ENCODE measurements at regions of chr9 and their contacts with region 1.

Region 1: GRCh38 chr9:133485361-133486260 is 6.7 kb upstream of the SLC2A6 start:
- DNase-seq: no peak
- ATAC-seq: peak; percentile 76
- H3K4me3 ChIP-seq: no peak overlapping the region
- H3K27ac ChIP-seq: no peak overlapping the region
- H3K4me1 ChIP-seq: peaks cover 3% of the 10 kb centered on the region
- H3K27me3 ChIP-seq: no peaks in the 10 kb centered on the region; a peak in 3 of 4 replicates
- CTCF ChIP-seq: no peak
- EP300 ChIP-seq: no peak
- POLR2A ChIP-seq: no peak
- RAD21 ChIP-seq: no peak

Region 2: GRCh38 chr9:133335878-133336811 is 149.5 kb before region 1 on chr9 and contains the start of gene SURF6:
- CTCF ChIA-PET with region 1: interaction called, 11 read pairs
- POLR2A ChIA-PET with region 1: no interaction called
- RAD21 ChIA-PET with region 1: no interaction called
- SMC1A ChIA-PET with region 1: no interaction called
- in situ Hi-C with region 1: no loop called
- intact Hi-C with region 1: no loop called
- DNase-seq: peak; percentile 69
- ATAC-seq: peak; percentile 98
- H3K4me3 ChIP-seq: peak within 1 kb of the TSS; percentile 98
- H3K27ac ChIP-seq: peak within 1 kb of the TSS; percentile 82
- H3K4me1 ChIP-seq: peaks cover 9% of the 10 kb centered on the region
- H3K27me3 ChIP-seq: no peaks in the 10 kb centered on the region
- CTCF ChIP-seq: no peak
- EP300 ChIP-seq: no peak
- POLR2A ChIP-seq: peak; percentile 90
- RAD21 ChIP-seq: no peak
- polyA plus RNA-seq, gene SURF6: 2.2 to 3.0 TPM

Region 3: GRCh38 chr9:133406480-133407307 is 78.9 kb before region 1 on chr9:
- CTCF ChIA-PET with region 1: interaction called, 6 read pairs
- POLR2A ChIA-PET with region 1: no interaction called
- RAD21 ChIA-PET with region 1: no interaction called
- SMC1A ChIA-PET with region 1: no interaction called
- in situ Hi-C with region 1: loop called (anchors 5 kb)
- intact Hi-C with region 1: loop called (anchors 1 kb)
- DNase-seq: no peak
- ATAC-seq: peak; percentile 97
- H3K4me3 ChIP-seq: no peak overlapping the region
- H3K27ac ChIP-seq: no peak overlapping the region
- H3K4me1 ChIP-seq: no peaks in the 10 kb centered on the region
- H3K27me3 ChIP-seq: no peaks in the 10 kb centered on the region
- CTCF ChIP-seq: peak; percentile 91 to 97 (median 93); a peak in 5 of 6 replicates
- EP300 ChIP-seq: no peak
- POLR2A ChIP-seq: no peak; the same call in none of the 2 replicates
- RAD21 ChIP-seq: peak; percentile 58

Region 4: GRCh38 chr9:133417541-133418461 is 67.8 kb before region 1 on chr9 and contains the start of gene REXO4:
- CTCF ChIA-PET with region 1: interaction called, 12 read pairs
- POLR2A ChIA-PET with region 1: no interaction called
- RAD21 ChIA-PET with region 1: interaction called, 3 read pairs
- SMC1A ChIA-PET with region 1: no interaction called
- in situ Hi-C with region 1: no loop called
- intact Hi-C with region 1: no loop called
- DNase-seq: peak; percentile 73
- ATAC-seq: peak; percentile 74
- H3K4me3 ChIP-seq: peak within 1 kb of the TSS; percentile 89
- H3K27ac ChIP-seq: peak within 1 kb of the TSS; percentile 90
- H3K4me1 ChIP-seq: peaks cover 51% of the 10 kb centered on the region
- H3K27me3 ChIP-seq: no peaks in the 10 kb centered on the region
- CTCF ChIP-seq: no peak
- EP300 ChIP-seq: no peak
- POLR2A ChIP-seq: peak; percentile 87
- RAD21 ChIP-seq: no peak
- polyA plus RNA-seq, gene REXO4: 2.7 to 8.4 TPM